Activated CD8-positive, alpha-beta T cell treated with anti-CD3 and anti-CD28 coated beads, Interleukin-2, amount 10 ng/mL, durations not matched to agents 7 days and 5 days (primary cell): ENCODE measurements at regions of chr16 and their contacts with region 1.

Region 1: DNA sequence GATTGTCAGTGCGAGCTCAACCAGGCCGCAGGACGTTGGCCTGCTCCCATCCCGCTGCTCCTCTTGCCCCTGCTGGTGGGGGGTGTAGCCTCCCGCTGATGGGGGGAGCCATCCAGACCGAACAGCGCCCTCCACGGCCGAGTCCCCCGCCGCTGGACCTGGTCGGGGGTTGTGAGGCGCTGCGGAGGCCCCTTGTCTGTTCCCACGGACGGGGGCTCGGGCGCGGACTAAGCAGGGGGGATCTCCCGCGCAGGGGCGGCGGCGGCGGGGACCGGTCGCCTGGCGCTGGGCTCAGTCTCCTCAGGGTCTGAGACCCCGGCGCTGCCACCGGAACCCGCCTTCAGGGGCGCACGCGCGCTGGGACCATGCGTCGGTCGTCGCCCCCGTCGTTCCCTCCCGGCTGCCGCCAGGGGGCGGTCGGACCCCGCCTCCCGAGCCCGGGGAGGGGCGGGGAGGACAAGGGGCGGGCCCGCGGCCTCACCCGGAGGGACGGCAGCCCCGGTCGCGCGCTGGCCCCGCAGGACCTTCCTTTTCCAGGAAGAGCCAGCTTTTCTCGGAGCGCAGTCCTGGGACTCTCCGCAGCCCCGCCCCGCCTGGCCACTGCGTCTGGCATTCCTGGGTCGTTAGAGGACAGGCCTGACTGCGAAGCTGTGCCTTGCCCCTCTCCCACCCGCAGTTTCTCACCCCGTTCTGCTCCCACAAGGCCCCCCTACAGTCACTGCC is 6.3 kb upstream of the IL32 start:
- DNase-seq: peak; percentile 90
- ATAC-seq: peak; percentile 83
- H3K4me3 Mint-ChIP-seq: peak overlapping the region; percentile 94
- H3K27ac Mint-ChIP-seq: peak overlapping the region; percentile 94
- H3K4me1 Mint-ChIP-seq: peaks cover 71% of the 10 kb centered on the region
- H3K27me3 Mint-ChIP-seq: no peaks in the 10 kb centered on the region

Region 2: GRCh38 chr16:2955779-2956578 is 103.2 kb before region 1 on chr16:
- CTCF ChIA-PET with region 1: no interaction called
- POLR2A ChIA-PET with region 1: no interaction called
- DNase-seq: no peak
- ATAC-seq: no peak
- H3K4me3 Mint-ChIP-seq: no peak overlapping the region
- H3K27ac Mint-ChIP-seq: no peak overlapping the region
- H3K4me1 Mint-ChIP-seq: peaks cover 7% of the 10 kb centered on the region
- H3K27me3 Mint-ChIP-seq: peaks cover 8% of the 10 kb centered on the region

Region 3: DNA sequence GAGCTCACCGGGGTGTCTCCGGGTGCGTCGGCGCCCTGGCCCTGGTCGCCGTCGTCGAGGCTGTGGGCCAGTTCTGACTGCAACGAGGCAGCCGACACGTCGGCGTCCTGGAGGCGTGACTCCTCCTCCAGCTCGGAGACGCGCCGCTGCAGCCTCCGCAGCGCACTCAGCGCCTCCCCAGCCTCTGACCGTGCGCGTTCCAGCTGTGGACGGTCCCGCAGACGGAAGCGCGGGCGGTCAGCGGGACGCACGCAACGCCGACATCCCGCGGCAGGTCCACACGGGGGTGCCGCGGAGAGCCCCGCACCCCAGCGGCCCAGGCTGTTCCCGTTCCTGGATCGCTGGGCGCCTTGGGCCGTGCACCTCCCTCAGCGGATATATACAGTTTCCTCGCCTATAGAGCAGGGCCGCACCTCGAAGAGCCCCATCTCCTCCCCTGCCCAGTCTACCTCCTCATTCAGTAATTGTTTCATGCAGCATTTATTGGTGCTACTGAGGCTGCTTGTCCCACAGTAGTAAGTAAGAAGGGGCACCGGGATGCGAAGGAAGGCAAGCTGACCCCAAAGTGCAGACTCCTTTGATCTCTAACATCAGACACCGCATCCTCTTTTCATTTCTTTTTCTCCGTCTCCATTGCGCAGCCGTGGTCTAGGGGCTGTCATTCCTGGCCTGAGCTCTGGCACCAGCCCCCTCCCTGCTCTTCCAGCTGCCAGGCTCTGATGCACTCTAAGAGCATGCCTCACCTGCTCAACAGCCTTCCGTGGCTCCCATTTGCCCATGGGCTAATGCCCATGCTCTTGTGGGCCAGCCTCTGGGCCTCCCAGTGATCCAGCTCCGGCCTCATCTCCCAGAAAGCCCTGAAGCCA is 29.4 kb before region 1 on chr16:
- CTCF ChIA-PET with region 1: interaction called, 41 read pairs
- POLR2A ChIA-PET with region 1: interaction called, 5 read pairs
- DNase-seq: peak; percentile 68
- ATAC-seq: peak; percentile 58
- H3K4me3 Mint-ChIP-seq: peak overlapping the region; percentile 65
- H3K27ac Mint-ChIP-seq: peak overlapping the region; percentile 65
- H3K4me1 Mint-ChIP-seq: peaks cover 44% of the 10 kb centered on the region
- H3K27me3 Mint-ChIP-seq: peaks cover 40% of the 10 kb centered on the region

Region 4: DNA sequence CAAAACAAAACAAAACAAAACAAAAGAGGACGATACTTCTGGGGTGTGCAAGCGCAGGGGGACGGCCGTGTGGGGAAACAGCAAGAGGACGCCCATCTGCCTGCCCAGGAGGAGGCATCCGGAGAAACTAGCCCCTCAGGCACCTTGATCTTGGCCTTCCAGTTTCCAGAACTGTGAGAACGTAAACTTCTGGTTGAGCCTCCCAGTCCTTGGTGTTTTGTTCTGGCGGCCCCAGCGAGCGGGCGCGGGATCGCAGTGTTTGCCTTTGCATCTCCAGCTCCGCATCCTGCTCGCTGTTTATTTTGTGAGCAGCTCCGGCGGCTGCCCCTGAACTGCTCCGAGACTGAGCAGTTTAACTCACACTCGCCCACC is 13.8 kb before region 1 on chr16:
- CTCF ChIA-PET with region 1: interaction called, 32 read pairs
- POLR2A ChIA-PET with region 1: interaction called, 19 read pairs
- DNase-seq: peak; percentile 73
- ATAC-seq: peak; percentile 56
- H3K4me3 Mint-ChIP-seq: peak overlapping the region; percentile 83
- H3K27ac Mint-ChIP-seq: peak overlapping the region; percentile 78
- H3K4me1 Mint-ChIP-seq: peaks cover 44% of the 10 kb centered on the region
- H3K27me3 Mint-ChIP-seq: peaks cover 33% of the 10 kb centered on the region

Region 5: GRCh38 chr16:3087243-3088235 is 28.4 kb after region 1 on chr16:
- CTCF ChIA-PET with region 1: interaction called, 17 read pairs
- POLR2A ChIA-PET with region 1: no interaction called
- DNase-seq: no peak
- ATAC-seq: peak; percentile 30
- H3K4me3 Mint-ChIP-seq: no peak overlapping the region
- H3K27ac Mint-ChIP-seq: peak overlapping the region; percentile 55
- H3K4me1 Mint-ChIP-seq: peaks cover 57% of the 10 kb centered on the region
- H3K27me3 Mint-ChIP-seq: no peaks in the 10 kb centered on the region

Region 6: DNA sequence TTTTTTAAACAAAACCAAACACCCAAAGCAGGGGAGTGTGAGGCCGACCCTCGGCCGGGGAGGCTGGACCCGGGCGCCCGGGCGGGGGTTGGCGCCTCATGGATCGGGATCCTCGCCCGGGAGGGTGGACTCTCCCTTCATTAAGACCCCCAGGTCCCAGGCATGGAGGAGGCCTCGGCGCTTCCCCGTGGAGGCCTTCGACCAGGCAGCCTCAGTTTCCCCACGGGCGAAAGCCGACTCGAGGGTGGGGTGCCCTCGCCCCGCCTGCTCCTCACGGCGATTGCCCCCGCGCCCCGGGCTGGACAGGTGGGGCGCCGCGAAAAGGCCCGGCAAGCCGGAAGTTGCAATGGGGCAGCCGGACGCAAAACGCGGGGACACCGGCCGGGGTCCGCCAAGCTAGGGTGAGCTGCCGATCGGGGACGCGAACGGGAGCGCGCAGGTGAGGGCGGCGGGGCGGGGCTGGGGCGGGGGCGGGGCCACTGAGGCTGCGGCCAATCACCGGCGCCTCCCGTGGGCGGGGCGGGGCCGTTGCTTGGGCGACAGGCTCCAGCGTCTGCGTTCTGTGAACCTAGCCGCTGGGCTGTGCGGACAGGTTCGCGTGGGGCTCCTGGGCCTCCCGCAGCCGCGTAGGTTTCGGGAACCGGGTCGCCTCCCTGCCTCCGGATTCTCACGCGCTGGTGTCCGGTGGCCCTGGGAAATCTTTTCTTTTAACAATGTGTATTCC is 47.2 kb after region 1 on chr16:
- CTCF ChIA-PET with region 1: interaction called, 17 read pairs
- POLR2A ChIA-PET with region 1: interaction called, 6 read pairs
- DNase-seq: peak; percentile 94
- ATAC-seq: peak; percentile 97
- H3K4me3 Mint-ChIP-seq: peak overlapping the region; percentile 76
- H3K27ac Mint-ChIP-seq: peak overlapping the region; percentile 87
- H3K4me1 Mint-ChIP-seq: peaks cover 45% of the 10 kb centered on the region
- H3K27me3 Mint-ChIP-seq: peaks cover 6% of the 10 kb centered on the region

Region 7: DNA sequence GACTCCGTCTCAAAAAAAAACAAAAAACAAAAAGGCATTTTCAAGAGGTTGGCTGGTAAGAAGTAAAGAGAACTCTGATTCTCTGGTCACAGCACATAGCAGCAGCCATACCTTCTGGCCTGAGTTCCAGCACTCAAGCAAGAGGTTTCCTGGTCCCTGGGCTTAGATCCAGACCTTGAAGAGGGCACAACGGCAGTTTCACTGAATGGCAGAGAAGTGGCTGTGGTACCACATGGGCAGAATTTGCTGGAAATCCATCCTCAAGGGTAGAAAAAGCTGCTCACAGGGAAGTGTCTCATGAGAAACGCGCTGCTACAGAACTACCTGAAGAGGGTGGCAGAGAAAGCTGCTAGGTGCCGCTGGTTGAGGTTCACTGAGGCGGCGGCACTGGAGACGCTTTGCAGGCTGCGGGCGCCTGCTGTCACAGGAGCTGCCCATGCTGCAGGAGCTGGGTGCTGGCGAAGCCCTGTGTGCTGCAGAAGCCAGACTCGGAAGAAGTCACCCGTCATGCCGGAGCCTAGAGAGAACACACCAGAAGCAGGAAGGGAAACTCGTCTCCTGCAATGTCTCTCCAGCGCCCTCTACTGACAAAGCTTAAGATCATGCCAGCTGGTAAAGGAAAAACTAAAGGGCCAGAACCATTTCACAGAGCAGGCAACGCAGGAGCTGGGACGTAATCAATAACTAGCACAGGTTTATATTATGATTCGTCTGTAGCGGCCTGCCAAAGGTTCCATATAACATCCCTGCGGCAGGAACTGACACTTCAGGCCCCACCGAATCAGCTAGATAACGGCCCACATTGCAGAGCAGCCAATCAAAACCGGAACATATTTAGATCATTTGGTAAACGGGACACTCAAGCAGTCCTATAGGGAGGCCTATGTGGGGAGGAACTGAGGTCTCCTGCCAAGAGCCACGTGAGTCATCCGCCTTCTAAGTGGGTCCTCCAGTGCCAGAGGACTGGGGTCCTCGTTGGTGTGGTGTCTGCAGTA is 70.3 kb after region 1 on chr16:
- CTCF ChIA-PET with region 1: interaction called, 230 read pairs
- POLR2A ChIA-PET with region 1: interaction called, 26 read pairs
- DNase-seq: peak; percentile 89
- ATAC-seq: peak; percentile 69
- H3K4me3 Mint-ChIP-seq: peak overlapping the region; percentile 94
- H3K27ac Mint-ChIP-seq: peak overlapping the region; percentile 90
- H3K4me1 Mint-ChIP-seq: peaks cover 67% of the 10 kb centered on the region
- H3K27me3 Mint-ChIP-seq: no peaks in the 10 kb centered on the region

Region 8: DNA sequence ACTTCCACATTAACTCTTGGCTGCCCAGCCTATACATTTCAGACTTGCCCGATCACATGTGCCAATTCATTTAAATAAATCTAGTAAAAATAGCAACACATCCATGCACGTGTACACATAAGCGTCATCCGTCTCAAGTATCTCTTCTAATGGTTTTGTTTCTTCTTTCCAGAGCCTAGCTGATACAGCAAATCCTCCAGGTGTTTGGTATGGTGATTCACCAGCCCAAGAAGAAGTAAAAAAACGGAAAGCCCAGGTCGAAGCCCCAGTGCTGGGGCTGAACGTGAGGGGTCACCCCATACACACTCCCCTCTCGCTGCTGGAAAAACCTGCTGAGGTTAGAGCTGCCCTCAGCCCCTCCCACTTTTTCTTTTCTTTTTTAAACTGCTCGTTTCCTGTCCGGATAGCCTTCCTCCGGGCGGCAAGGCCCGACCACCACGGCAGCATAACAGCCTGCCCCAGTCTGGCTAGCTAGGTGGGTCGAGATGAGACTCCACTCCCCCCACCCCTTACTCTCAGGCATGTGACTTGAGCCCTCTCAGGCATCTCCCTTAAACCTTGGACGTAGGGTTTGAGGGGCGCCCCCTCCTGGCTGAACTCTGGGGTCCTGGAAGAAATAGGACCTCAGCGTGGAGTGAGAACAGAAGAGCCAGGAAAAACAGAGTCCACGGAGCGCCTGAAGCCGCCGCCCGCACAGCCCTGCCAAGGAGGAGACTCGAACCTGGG is 114.9 kb after region 1 on chr16:
- CTCF ChIA-PET with region 1: interaction called, 11 read pairs
- POLR2A ChIA-PET with region 1: interaction called, 3 read pairs
- DNase-seq: no peak
- ATAC-seq: peak; percentile 10
- H3K4me3 Mint-ChIP-seq: peak overlapping the region; percentile 63
- H3K27ac Mint-ChIP-seq: peak overlapping the region; percentile 30
- H3K4me1 Mint-ChIP-seq: peaks cover 42% of the 10 kb centered on the region
- H3K27me3 Mint-ChIP-seq: peaks cover 56% of the 10 kb centered on the region